Activated CD8-positive, alpha-beta T cell treated with anti-CD3 and anti-CD28 coated beads for 36 hours (primary cell): ENCODE measurements at regions of chr14 and their contacts with region 1.

Region 1: DNA sequence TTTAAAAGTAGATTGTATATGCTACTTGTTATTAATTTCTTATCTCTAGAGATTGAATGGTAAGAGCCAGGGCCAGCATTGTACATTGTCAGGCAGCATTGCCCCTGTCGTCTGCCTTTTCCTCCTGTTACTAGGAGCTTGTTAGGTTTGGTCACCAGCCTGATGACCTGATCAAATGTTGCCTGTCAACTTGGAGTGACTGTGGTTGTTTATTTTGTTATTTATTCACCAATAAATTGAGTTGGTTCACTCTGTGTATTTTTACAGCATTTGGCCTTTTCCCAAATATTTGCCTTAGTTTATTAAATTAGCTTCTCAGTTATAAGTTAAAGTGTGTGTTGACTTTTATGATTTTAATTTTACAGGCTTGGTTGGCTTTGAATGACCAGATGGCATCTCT is 88.4 kb downstream of the PRKCH start:
- DNase-seq: no peak
- ATAC-seq: no peak
- H3K4me3 Mint-ChIP-seq: no peak overlapping the region
- H3K27ac Mint-ChIP-seq: no peak overlapping the region
- H3K4me1 Mint-ChIP-seq: peaks cover 46% of the 10 kb centered on the region
- H3K27me3 Mint-ChIP-seq: no peaks in the 10 kb centered on the region
- CTCF ChIP-seq: no peak

Region 2: GRCh38 chr14:61048640-61049039 is 361.1 kb before region 1 on chr14:
- CTCF ChIA-PET with region 1: no interaction called
- POLR2A ChIA-PET with region 1: no interaction called
- intact Hi-C with region 1: no loop called
- DNase-seq: no peak
- ATAC-seq: no peak
- H3K4me3 Mint-ChIP-seq: no peak overlapping the region
- H3K27ac Mint-ChIP-seq: no peak overlapping the region
- H3K4me1 Mint-ChIP-seq: no peaks in the 10 kb centered on the region
- H3K27me3 Mint-ChIP-seq: no peaks in the 10 kb centered on the region
- CTCF ChIP-seq: no peak

Region 3: DNA sequence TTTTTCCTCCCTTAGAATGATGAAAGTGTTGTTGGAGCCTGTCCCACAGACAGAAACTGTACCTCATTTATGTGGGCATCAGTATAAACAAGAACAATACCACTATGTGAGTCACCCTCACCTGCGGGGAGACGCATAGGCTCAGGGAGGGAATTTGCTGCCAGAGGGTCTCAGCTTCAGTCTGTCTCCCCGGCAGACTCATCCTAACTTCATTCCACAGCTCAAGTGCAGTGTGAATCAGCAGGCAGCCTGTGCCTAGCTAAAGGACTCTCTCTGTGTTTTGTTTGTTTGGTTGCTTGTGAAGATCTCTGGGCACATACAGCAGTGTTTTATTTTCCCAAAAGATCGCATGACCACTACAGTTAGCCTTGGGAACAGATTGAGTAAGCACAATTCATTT is 10.6 kb after region 1 on chr14:
- CTCF ChIA-PET with region 1: interaction called, 3 read pairs
- POLR2A ChIA-PET with region 1: interaction called, 24 read pairs
- intact Hi-C with region 1: no loop called
- DNase-seq: peak; percentile 58
- ATAC-seq: peak; percentile 47
- H3K4me3 Mint-ChIP-seq: peak overlapping the region; percentile 27
- H3K27ac Mint-ChIP-seq: no peak overlapping the region
- H3K4me1 Mint-ChIP-seq: peaks cover 88% of the 10 kb centered on the region
- H3K27me3 Mint-ChIP-seq: no peaks in the 10 kb centered on the region
- CTCF ChIP-seq: no peak

Region 4: DNA sequence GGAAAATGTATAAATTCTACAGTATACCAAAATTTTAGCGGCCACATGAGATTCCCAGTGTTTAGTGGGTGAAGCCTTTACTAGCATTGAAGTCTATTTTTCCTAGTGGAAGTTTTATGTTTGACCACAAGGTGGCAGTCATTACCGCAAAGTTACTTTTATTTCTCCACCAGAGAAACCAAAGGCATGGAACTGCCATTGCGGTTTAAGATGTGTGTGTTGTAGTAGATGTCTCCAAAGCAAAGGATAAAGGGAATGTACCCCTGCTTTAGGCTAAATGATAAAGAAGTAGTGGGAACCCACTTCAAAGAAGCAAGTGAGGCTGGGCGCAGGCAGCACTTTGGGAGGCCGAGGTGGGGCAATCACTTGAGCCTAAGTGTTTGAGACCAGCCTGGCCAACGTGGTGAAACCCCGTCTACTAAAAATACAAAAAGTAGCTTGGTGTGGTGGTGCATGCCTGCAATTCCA is 52.1 kb after region 1 on chr14:
- CTCF ChIA-PET with region 1: no interaction called
- POLR2A ChIA-PET with region 1: no interaction called
- intact Hi-C with region 1: no loop called
- DNase-seq: peak; percentile 42
- ATAC-seq: peak; percentile 22
- H3K4me3 Mint-ChIP-seq: no peak overlapping the region
- H3K27ac Mint-ChIP-seq: peak overlapping the region; percentile 97
- H3K4me1 Mint-ChIP-seq: peaks cover 63% of the 10 kb centered on the region
- H3K27me3 Mint-ChIP-seq: no peaks in the 10 kb centered on the region
- CTCF ChIP-seq: peak; percentile 96